Aorta (tissue), 5 donors: ENCODE measurements at regions of chr5 and their contacts with region 1.

Region 1: GRCh38 chr5:115841382-115842088 is at the starts of genes AP3S1 and ATG12:
- DNase-seq: peak; percentile 96
- ATAC-seq: peak; percentile 98
- H3K4me3 ChIP-seq: peak within 1 kb of the TSS; percentile 72 to 83
- H3K27ac ChIP-seq: peak within 1 kb of the TSS; percentile 58 to 83
- H3K4me1 ChIP-seq: peaks cover 0 to 11% of the 10 kb centered on the region in 2 donors
- H3K27me3 ChIP-seq: no peaks in the 10 kb centered on the region
- total RNA-seq, gene AP3S1: 114 to 118 TPM
- total RNA-seq, gene ATG12: 42.5 to 52.5 TPM

Region 2: DNA sequence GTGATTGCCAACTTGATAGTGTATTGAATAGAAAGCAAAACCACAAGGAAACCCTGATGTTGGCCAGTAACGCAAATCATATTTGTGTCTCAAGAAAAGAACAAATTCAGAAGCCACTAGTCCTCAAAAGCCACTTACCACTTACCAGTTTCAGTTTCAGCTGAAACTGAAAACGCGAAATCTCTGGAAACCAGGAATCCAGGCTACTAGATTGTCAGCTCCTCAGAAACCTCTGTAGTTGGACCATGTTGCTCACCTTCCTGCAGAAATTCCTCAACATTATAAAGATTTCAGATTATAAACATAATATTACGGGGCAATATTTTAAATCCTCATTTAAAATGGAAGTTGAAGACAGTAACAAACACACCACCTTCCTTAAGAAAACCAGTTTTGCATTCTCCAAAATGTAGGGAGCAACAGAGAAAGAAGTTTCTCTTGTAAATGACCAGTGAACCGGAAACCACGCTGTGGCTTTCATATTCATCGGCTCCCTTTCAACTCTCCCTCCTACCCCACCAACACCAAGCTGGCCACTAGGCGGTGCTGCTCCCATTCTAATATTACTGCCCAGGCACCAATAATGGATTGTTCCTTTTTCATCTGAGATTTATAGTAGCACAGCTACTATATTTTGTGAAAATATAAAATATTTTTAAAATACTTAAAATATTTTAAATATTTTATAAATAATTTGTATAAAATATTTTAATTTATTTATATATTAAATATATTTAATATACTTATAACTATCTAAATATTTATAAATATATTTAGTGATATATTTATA is 207.0 kb before region 1 on chr5:
- intact Hi-C with region 1: loop called in 1 of 2 experiments (anchors 1 kb)
- DNase-seq: peak; percentile 93 to 96
- ATAC-seq: peak; percentile 93
- H3K4me3 ChIP-seq: peak overlapping the region; percentile 20 to 60
- H3K27ac ChIP-seq: peak overlapping the region in 1 of 2 donors; percentile 34
- H3K4me1 ChIP-seq: no peaks in the 10 kb centered on the region
- H3K27me3 ChIP-seq: no peaks in the 10 kb centered on the region

Region 3: GRCh38 chr5:115962503-115963402 is 121.2 kb after region 1 on chr5:
- intact Hi-C with region 1: loop called in 1 of 2 experiments (anchors 10 kb)
- DNase-seq: peak; percentile 58 to 82
- ATAC-seq: peak; percentile 73
- H3K4me3 ChIP-seq: no peak overlapping the region
- H3K27ac ChIP-seq: no peak overlapping the region
- H3K4me1 ChIP-seq: no peaks in the 10 kb centered on the region
- H3K27me3 ChIP-seq: no peaks in the 10 kb centered on the region

Region 4: DNA sequence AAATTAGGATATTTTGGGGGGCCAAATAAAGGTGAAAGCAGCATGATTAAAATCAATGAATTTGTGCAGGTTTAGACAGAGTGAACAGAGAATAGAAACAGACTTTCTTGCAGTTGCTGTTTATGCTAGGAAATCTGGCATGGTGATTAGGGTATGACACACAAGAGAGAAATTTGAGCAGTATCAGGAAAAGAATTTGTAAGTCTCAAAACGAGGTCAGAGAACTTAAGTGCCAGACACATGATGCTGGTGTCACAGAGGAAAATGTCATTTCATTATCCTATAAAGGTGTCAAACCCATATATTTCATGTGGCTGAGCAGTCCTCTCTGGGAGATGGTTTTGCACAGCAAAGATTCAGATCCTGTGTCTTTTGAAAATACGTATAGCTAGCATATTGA is 136.5 kb after region 1 on chr5:
- intact Hi-C with region 1: loop called in 1 of 2 experiments (anchors 10 kb)
- DNase-seq: no peak
- ATAC-seq: peak; percentile 74
- H3K4me3 ChIP-seq: no peak overlapping the region
- H3K27ac ChIP-seq: peak overlapping the region in 1 of 2 donors; percentile 46
- H3K4me1 ChIP-seq: peaks cover 0 to 13% of the 10 kb centered on the region in 2 donors
- H3K27me3 ChIP-seq: no peaks in the 10 kb centered on the region

Region 5: DNA sequence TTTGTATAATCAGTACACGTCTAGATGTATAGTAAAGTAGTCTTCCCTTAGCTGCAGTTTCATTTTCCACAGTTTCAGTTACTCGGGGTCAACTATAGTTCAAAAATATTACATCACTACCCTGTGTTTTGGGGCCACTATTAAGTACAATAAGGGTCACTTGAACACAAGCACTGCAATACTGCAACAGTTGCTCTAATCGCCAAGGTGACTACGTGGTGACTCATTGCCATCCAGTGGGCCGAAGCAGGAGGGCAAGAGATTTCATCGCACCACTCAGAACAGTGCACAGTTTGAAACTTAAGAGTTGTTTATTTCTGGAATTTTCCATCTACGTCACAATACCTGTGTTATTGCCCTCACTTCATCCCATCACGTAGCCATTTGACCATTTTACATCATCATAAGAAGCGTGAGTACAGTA is 190.6 kb after region 1 on chr5 and contains the start of gene ARL14EPL:
- intact Hi-C with region 1: loop called in 1 of 2 experiments (anchors 5 kb)
- DNase-seq: peak; percentile 59 to 70
- ATAC-seq: peak; percentile 71
- H3K4me3 ChIP-seq: no peak within 1 kb of the TSS
- H3K27ac ChIP-seq: no peak within 1 kb of the TSS
- H3K4me1 ChIP-seq: no peaks in the 10 kb centered on the region
- H3K27me3 ChIP-seq: no peaks in the 10 kb centered on the region
- total RNA-seq, gene ARL14EPL: 0.63 TPM in 1 of 2 donors, not detected in the other

Region 6: GRCh38 chr5:116068028-116068632 is 226.6 kb after region 1 on chr5:
- intact Hi-C with region 1: loop called in 1 of 2 experiments (anchors 5 kb)
- DNase-seq: no peak
- ATAC-seq: no peak
- H3K4me3 ChIP-seq: no peak overlapping the region
- H3K27ac ChIP-seq: no peak overlapping the region
- H3K4me1 ChIP-seq: no peaks in the 10 kb centered on the region
- H3K27me3 ChIP-seq: no peaks in the 10 kb centered on the region

Region 7: GRCh38 chr5:116098998-116099397 is 257.5 kb after region 1 on chr5:
- intact Hi-C with region 1: no loop called
- DNase-seq: no peak
- ATAC-seq: no peak
- H3K4me3 ChIP-seq: no peak overlapping the region
- H3K27ac ChIP-seq: no peak overlapping the region
- H3K4me1 ChIP-seq: no peaks in the 10 kb centered on the region
- H3K27me3 ChIP-seq: no peaks in the 10 kb centered on the region

Region 8: DNA sequence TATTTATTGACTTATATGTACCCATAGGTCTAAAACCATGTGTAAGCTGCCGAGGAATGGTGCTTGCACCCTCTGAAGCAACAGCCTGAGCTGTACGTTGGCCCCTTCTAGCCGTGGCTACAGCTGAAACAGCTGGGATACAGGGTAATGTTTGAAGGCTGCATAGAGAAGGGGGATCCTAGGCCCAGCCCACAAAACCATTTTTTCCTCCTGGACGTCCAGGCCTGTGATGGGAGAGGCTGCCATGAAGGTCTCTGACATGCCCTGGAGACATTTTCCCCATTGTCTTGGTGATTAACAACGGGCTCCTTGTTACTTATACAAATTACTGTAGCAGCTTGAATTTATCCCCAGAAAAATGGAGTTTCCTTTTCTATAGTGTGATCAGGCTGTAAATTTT is 488.0 kb after region 1 on chr5:
- intact Hi-C with region 1: no loop called
- DNase-seq: no peak
- ATAC-seq: no peak
- H3K4me3 ChIP-seq: no peak overlapping the region
- H3K27ac ChIP-seq: no peak overlapping the region
- H3K4me1 ChIP-seq: no peaks in the 10 kb centered on the region
- H3K27me3 ChIP-seq: no peaks in the 10 kb centered on the region

Region 9: GRCh38 chr5:116395631-116396203 is 554.2 kb after region 1 on chr5:
- intact Hi-C with region 1: no loop called
- DNase-seq: no peak
- ATAC-seq: peak; percentile 10
- H3K4me3 ChIP-seq: no peak overlapping the region
- H3K27ac ChIP-seq: peak overlapping the region in 1 of 2 donors; percentile 58
- H3K4me1 ChIP-seq: peaks cover 3 to 6% of the 10 kb centered on the region in 2 donors
- H3K27me3 ChIP-seq: no peaks in the 10 kb centered on the region

Region 10: DNA sequence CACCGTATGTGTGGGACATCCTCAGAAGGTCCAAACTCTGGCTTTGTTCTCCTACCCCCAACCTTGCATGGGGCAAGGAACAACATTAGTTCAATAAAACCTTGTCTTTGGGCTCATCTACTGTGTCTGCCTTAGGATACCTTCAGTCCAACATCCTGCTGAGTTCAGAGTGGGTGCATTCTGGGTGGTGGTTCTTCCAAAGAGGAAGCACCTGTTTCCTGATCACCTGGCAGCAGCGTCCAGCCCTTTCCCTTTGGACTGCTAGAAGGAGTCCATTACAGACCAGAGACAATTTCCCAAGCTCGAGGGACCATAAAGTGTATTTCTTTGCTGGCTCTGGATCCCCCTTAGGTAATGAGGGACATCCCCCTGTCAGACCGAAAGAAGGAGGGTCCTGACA is 579.0 kb after region 1 on chr5:
- intact Hi-C with region 1: no loop called
- DNase-seq: no peak
- ATAC-seq: no peak
- H3K4me3 ChIP-seq: no peak overlapping the region
- H3K27ac ChIP-seq: no peak overlapping the region
- H3K4me1 ChIP-seq: no peaks in the 10 kb centered on the region
- H3K27me3 ChIP-seq: no peaks in the 10 kb centered on the region